ENCODE measurements at regions of chrX and their contacts with region 1.

Region 1: DNA sequence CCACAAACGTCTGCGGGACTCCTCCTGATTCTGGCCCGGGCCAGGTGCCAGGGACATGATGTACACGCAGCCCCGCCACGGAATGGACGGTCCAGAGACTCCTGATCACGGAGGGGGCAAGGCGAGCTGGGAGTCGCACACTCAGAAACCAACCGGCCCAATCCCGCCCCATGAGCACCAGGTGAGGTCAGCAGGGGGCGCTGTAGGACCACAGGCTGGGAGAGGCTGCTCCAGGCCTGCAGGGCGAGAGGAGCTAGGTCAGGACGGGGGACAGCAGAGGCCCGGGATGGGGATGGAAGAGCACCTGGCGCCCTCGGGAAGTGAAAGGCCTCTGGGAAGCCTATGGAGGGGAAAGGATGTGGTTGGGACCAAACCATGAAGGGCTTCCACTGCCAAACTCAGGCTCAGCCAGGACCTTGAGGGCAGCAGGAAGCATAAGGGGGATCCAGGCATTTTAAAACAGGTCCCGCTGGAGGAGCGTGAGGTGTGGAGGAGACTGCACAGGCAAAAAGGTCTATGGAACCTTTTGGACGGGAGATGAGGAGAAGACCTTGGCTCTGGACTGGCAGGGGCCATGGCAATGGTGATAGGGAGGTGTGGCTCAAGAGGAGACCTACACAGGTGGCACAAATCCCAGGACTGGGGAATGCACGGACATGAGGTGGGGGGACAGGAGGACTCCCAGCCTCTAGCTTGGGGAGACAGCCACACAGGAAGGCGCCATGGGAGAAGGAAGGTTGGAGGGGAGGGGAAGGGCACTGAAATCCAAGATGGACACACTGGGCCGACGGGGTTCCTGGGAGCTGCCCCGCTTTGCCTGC is 79.2 kb downstream of the MTMR1 start:
- DNase-seq: peak; percentile 92

Region 2: GRCh38 chrX:150649096-150649870 is 123.1 kb before region 1 on chrX:
- intact Hi-C with region 1: no loop called
- DNase-seq: peak; percentile 82

Region 3: DNA sequence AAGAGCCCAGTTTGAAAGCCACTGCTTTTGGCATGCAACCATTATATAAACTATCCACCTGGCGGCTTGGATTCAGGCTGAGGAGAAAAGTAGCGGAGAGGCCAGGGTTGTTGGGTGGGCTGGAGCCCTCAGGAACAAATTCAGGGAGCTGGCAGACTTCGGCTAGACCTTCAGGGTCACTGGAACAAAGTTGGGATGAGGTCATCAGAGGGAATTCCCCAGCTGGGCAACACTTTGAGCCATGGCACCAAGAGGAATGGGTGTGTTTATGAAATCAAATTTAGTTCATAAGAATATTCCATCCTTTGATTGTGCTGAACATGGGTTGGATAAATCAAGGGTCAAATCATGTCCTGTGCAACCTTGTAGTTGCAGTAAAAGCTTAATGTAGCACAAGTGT is 57.2 kb before region 1 on chrX:
- intact Hi-C with region 1: no loop called
- DNase-seq: no peak

Region 4: DNA sequence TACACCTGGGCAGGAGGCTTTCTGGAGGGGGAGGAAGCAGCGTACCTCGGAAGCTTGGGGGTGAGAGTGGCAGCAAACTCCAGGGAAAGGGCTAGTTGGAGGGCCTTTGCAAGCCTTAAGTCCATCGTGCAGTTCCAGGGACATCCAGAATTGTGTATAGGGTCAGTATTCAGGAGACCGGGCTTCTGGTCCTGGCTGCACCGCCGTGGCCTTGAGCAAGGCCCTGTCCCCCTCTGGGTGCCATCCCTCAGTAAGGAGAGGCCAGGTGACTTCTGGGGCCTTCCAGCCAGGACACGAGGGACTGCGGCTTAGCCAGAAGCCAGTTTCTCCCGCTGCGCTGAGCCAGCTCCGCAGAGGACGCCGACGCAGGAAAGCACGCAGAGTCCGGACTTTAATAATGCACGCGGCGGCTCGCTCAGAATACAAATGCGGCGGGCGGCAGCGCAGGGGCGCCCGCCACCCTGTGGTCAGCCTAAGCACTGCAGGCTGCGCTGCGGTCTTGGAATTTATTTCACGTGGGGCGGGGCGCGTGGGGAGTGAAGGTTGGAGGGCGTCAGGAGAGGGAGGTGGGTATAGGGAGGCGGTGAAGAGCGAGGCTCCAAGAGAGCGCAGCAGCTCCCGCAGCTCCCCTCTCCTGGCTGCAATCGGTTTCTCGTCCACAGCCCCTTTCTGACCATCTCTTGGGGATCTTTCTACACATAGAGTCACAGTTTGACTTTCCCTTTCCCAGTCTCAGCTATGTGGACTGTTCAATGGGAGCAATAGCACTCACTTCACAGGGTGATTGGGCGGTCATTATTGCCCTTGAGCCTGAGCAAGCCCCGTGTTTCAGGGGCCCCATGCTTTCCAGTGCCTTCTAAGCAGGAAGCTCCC is 310.0 kb after region 1 on chrX:
- intact Hi-C with region 1: loop called (anchors 2 to 5 kb)
- DNase-seq: peak; percentile 91